Right ventricle myocardium inferior (tissue), 1 donor: ENCODE measurements at regions of chr2 and their contacts with region 1.

Region 1: GRCh38 chr2:241508240-241509154 is at the start of gene STK25:
- DNase-seq: peak; percentile 99
- ATAC-seq: peak; percentile 98
- total RNA-seq, gene STK25: 97.4 TPM

Region 2: GRCh38 chr2:241315093-241315878 is 193.2 kb before region 1 on chr2 and contains the start of gene HDLBP:
- intact Hi-C with region 1: loop called (anchors 5 kb)
- DNase-seq: peak; percentile 100
- ATAC-seq: peak; percentile 93
- total RNA-seq, gene HDLBP: 393 TPM

Region 3: GRCh38 chr2:241355983-241356870 is 152.3 kb before region 1 on chr2 and contains the start of gene FARP2:
- intact Hi-C with region 1: loop called (anchors 5 kb)
- DNase-seq: peak; percentile 100
- ATAC-seq: peak; percentile 94
- total RNA-seq, gene FARP2: 15.0 TPM

Region 4: DNA sequence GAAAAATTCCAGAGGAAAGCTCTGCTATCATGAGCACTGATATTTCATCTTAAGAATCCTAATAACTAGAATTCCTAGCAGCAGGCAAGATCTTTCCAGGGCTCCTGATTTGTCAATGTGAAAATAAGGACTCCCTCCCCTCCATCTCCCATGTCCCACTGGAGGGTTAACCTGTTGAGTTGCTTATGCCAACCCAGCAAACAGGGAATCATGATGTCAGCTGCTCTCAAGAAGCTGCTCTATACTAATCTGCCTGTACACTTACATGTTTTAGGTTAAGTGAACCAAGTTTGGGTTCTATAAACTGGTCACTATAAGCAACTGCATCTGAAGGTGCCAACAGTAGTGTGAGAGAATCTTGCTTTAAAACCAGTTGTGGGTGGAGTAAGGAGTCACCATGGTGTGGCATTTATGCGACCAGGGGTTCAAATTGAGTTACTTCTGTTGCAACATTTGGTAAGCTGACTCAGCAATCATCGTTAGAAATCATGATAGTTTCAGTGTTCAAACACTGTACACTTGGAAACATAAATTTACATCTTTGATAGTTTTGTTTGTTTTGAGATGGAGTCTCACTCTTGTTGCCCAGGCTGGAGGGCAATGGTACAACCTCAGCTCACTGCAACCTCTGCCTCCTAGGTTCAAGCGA is 53.5 kb before region 1 on chr2:
- intact Hi-C with region 1: no loop called
- DNase-seq: no peak
- ATAC-seq: no peak

Region 5: GRCh38 chr2:241558532-241559322 is 50.2 kb after region 1 on chr2 and contains the start of gene BOK:
- intact Hi-C with region 1: loop called (anchors 2 kb)
- DNase-seq: no peak
- ATAC-seq: no peak
- total RNA-seq, gene BOK: 4.5 TPM

Region 6: DNA sequence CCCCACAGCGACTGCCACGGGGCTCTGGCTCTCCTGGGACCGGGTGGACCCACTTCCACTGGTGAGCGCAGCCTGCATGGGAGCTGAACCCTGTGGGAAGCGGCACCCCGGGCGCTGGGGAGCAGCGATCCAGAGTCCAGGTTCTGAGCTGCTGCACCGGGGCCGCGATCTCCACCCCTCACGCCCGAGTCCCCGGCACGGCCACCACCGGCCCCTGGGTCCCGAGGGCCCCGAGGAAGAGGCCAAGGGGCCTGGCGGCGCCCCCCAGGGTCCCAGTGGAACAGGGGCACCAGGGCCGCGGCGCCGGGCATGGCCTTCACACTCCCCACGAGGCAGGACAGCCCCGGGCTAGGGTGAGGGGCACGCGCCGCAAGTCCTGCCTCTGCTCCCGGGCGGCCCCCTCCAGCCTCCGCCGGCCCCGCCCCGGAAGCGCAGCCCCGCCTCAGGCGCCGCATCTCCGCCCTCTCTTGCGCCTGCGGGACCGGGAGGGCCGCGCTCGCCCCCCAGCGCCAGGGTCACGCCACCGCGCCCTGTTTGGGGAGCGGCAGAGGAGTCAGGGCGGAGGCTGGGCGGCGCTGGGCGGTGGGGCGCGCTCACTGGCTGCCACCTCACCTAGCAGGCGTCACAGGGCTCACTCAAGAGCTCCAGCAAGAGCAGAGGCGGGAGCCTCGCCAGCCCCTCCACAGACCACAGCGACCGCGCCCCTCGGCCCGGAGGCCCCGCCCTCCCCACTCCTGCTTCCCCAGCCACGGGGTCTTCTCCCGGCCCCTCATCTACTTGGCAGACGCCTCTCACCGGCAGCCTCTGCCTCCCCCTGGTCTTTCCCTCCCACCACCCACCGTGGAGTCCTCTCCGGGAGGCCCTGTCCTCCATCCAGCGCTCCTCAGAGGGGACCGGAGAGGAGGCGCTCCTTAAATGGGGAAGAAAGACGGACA is 101.6 kb after region 1 on chr2:
- intact Hi-C with region 1: loop called (anchors 5 kb)
- DNase-seq: peak; percentile 91
- ATAC-seq: peak; percentile 89

Region 7: GRCh38 chr2:242085941-242086621 is 577.6 kb after region 1 on chr2:
- intact Hi-C with region 1: no loop called
- DNase-seq: no peak
- ATAC-seq: peak; percentile 64